Activated CD8-positive, alpha-beta T cell treated with anti-CD3 and anti-CD28 coated beads, Interleukin-2, amount 10 ng/mL, durations not matched to agents 7 days and 5 days (primary cell): ENCODE measurements at regions of chr19 and their contacts with region 1.

Region 1: GRCh38 chr19:54115109-54116063 is at the starts of genes PRPF31 and TFPT:
- DNase-seq: peak; percentile 98
- ATAC-seq: peak; percentile 92
- H3K4me3 Mint-ChIP-seq: peak within 1 kb of the TSS; percentile 98
- H3K27ac Mint-ChIP-seq: peak within 1 kb of the TSS; percentile 94
- H3K4me1 Mint-ChIP-seq: peaks cover 29% of the 10 kb centered on the region
- H3K27me3 Mint-ChIP-seq: no peaks in the 10 kb centered on the region
- total RNA-seq, gene PRPF31: 77.5 to 82.8 TPM
- total RNA-seq, gene TFPT: 50.9 to 51.4 TPM

Region 2: DNA sequence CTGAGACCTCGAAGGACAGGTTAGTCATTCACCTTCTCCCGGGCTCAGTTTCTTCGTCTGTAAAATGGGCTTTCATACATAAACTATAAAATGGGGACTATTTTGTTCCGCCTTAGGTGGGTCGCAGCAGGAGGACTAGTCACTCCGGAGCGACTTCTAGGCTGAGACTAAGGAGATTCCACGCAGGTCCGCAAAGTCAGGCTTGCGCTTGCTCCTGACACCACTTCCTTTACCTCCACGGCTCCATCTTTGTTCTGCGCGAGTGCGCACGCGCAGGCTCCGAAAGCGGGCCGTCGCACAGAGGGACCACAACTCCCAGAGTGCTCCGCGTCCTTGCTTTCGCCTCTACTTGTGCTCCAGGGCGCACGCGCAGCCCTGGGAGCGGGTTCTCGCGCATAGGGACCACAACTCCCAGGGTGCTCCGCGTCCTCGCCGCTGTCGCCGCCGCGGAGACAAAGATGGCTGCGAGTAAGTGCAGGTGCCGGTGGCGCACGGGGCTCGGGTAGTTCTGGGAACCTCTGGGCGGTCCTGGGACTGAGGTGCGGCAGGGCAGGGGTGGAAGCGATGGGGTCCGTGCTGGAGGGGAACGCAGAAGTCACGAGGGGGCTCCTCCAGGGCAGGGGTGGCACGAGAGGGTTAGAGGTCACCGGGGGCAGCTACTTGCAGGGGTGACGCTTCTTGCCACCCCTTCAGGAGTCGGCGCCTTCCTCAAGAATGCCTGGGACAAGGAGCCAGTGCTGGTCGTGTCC is 12.8 kb before region 1 on chr19 and contains the start of gene NDUFA3:
- CTCF ChIA-PET with region 1: interaction called, 3 read pairs
- POLR2A ChIA-PET with region 1: interaction called, 21 read pairs
- DNase-seq: peak; percentile 99
- ATAC-seq: peak; percentile 99
- H3K4me3 Mint-ChIP-seq: peak within 1 kb of the TSS; percentile 98
- H3K27ac Mint-ChIP-seq: peak within 1 kb of the TSS; percentile 97
- H3K4me1 Mint-ChIP-seq: peaks cover 27% of the 10 kb centered on the region
- H3K27me3 Mint-ChIP-seq: no peaks in the 10 kb centered on the region
- total RNA-seq, gene NDUFA3: 138 to 152 TPM

Region 3: DNA sequence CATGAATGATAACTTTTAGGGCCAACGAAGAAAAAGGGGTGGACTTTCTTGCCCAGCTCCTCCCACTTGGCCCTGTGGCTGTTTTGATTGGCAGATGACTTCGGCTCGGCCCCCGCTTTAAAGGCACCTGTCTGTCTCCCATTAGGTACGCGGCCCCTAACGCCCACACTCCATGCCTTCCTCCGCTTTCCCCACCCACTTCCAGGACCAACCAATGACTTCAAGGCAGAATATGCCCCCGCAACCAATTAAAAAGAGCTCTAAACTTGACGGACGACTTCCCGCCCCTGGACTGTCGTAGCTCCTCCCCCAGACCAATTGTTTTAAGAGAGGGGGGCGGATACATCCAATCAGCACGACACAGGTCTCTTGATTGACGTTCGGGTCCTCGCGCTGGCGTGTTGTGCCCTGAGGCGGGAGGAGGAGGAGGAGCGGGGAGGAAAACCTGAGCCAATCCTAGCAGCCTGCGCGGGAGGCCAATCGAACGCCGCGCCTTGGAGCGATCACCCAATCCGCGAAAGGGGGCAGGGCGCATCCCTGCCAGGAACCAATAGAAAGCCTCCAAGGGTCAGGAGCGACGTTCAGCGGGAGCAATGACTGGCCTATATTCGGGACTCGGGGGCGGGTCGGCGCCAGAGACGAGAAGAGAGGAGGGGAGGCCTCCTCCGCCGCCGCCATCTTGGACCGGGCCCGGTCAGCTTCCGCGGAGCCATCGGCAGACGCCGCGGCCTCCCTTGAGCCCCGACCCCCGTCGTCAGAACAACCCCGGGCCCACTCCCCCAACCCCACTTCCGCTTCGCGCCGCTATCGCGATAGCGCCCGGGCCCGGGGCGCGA is 21.9 kb after region 1 on chr19 and contains the start of gene CNOT3:
- CTCF ChIA-PET with region 1: interaction called, 4 read pairs
- POLR2A ChIA-PET with region 1: interaction called, 20 read pairs
- DNase-seq: peak; percentile 100
- ATAC-seq: peak; percentile 88
- H3K4me3 Mint-ChIP-seq: peak within 1 kb of the TSS; percentile 84
- H3K27ac Mint-ChIP-seq: peak within 1 kb of the TSS; percentile 92
- H3K4me1 Mint-ChIP-seq: peaks cover 45% of the 10 kb centered on the region
- H3K27me3 Mint-ChIP-seq: no peaks in the 10 kb centered on the region
- total RNA-seq, gene CNOT3: 55.1 to 58.4 TPM

Region 4: DNA sequence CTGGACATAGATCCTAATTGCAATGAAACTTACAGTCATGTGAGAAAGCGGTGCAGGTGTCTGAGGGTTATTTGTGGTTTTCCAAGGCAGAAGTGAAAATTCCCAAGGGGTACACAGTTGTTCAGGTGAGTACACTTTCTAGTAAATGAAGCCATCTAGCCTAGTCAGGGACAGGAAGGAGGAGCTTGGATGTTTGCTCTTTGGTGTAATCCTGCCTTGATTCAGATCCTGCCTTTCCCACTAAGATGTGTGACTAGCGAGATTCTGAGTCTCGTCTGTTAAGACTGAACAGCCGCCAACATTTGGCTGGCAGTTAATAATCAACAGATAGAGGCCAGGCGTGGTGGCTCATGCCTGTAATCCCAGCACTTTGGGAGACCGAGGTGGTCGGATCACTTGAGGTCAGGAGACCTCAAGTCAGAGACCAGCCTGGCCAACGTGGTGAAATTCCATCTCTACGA is 87.8 kb after region 1 on chr19:
- CTCF ChIA-PET with region 1: no interaction called
- POLR2A ChIA-PET with region 1: interaction called, 10 read pairs
- DNase-seq: no peak
- ATAC-seq: no peak
- H3K4me3 Mint-ChIP-seq: peak overlapping the region; percentile 100
- H3K27ac Mint-ChIP-seq: no peak overlapping the region
- H3K4me1 Mint-ChIP-seq: peaks cover 81% of the 10 kb centered on the region
- H3K27me3 Mint-ChIP-seq: no peaks in the 10 kb centered on the region